CD4-positive, alpha-beta T cell (primary cell): ENCODE measurements at regions of chr19 and their contacts with region 1.

Region 1: DNA sequence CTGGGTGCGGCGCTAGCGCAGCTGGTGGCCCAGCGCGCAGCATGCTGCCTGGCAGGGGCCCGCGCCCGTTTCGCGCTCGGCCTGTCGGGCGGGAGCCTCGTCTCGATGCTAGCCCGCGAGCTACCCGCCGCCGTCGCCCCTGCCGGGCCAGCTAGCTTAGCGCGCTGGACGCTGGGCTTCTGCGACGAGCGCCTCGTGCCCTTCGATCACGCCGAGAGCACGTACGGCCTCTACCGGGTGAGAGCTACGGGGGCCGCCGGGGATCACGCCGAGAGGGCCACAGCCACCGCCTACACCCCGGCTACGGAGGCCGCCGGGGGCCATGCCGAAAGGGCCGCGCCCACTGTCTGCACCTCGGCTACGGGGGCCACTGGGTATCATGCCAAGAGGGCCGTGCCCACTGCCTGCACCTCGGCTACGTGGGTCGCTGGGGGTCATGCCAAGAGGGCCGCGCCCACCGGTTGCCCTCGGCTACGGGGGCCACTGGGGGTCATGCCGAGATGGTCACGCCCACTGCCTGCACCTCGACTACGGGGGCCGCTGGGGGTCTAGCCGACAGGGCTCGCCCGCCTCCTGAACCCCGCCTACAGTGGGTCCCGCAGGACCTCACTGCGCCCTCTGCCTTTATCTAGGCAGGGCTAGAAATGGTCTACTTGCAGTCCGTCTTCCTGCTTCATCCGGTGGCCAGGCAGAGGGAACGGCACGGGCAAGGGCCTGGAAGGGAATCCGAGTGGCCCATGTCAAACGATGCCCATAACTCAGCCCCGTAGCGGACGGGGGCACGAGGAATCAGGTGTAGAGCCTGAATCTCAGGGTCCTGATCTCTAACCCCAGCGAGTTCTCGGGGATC is 500 bp downstream of the PGLS start:
- DNase-seq: peak; percentile 73 to 92 (median 82)
- ATAC-seq: peak; percentile 75
- H3K4me3 ChIP-seq: peak overlapping the region; percentile 82
- H3K4me3 Mint-ChIP-seq: peak overlapping the region; percentile 93
- H3K27ac ChIP-seq: peak overlapping the region; percentile 64 to 94
- H3K27ac Mint-ChIP-seq: peak overlapping the region; percentile 80
- H3K4me1 ChIP-seq: peaks cover 19% of the 10 kb centered on the region
- H3K4me1 Mint-ChIP-seq: peaks cover 33% of the 10 kb centered on the region
- H3K27me3 ChIP-seq: no peaks in the 10 kb centered on the region
- H3K27me3 Mint-ChIP-seq: no peaks in the 10 kb centered on the region
- CTCF ChIP-seq: no peak

Region 2: DNA sequence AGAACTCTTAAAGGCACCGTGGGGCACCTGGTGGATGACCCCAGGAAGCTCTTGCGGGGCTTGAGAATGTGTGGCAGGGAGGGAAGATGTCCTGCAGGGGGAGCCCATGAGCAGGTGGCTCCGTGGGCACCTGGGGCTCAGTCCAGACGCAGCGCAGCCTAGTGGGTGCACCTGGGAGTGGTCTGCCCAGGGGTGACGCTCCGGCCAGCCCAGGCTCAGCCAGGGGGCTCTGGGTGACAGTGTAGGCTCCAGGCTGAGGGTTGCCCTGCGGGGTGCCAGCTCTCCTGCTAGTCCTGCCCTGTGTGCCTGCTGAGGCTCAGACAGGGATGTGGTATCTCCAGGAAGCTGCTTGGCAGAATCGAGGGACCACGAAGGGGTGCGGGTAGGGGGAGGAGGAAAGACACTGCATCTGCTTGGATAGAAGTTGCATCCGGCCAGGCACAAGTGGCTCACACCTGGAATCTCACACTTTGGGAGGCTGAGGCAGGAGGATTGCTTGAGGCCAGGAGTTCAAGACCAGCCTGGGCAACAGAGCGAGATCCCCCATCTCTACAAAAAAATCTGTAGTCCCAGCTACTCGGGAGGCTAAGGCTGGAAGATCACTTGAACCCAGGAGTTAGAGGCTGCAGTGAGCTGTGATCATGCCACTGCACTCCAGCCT is 15.5 kb before region 1 on chr19:
- CTCF ChIA-PET with region 1: interaction called, 38 read pairs
- POLR2A ChIA-PET with region 1: interaction called, 7 read pairs
- intact Hi-C with region 1: no loop called
- DNase-seq: peak; percentile 68 to 91 (median 76)
- ATAC-seq: peak; percentile 99
- H3K4me3 ChIP-seq: no peak overlapping the region
- H3K4me3 Mint-ChIP-seq: no peak overlapping the region
- H3K27ac ChIP-seq: no peak overlapping the region
- H3K27ac Mint-ChIP-seq: no peak overlapping the region
- H3K4me1 ChIP-seq: peaks cover 25% of the 10 kb centered on the region
- H3K4me1 Mint-ChIP-seq: peaks cover 17% of the 10 kb centered on the region
- H3K27me3 ChIP-seq: no peaks in the 10 kb centered on the region
- H3K27me3 Mint-ChIP-seq: no peaks in the 10 kb centered on the region
- CTCF ChIP-seq: peak; percentile 96

Region 3: GRCh38 chr19:17522988-17523872 is 11.3 kb after region 1 on chr19:
- CTCF ChIA-PET with region 1: no interaction called
- POLR2A ChIA-PET with region 1: interaction called, 45 read pairs
- intact Hi-C with region 1: no loop called
- DNase-seq: peak in 12 of 14 experiments; percentile 9 to 80 (median 48)
- ATAC-seq: peak; percentile 72
- H3K4me3 ChIP-seq: peak overlapping the region; percentile 19
- H3K4me3 Mint-ChIP-seq: peak overlapping the region; percentile 78
- H3K27ac ChIP-seq: peak overlapping the region in 1 of 2 donors; percentile 46
- H3K27ac Mint-ChIP-seq: peak overlapping the region; percentile 87
- H3K4me1 ChIP-seq: peaks cover 32% of the 10 kb centered on the region
- H3K4me1 Mint-ChIP-seq: peaks cover 27% of the 10 kb centered on the region
- H3K27me3 ChIP-seq: no peaks in the 10 kb centered on the region
- H3K27me3 Mint-ChIP-seq: no peaks in the 10 kb centered on the region
- CTCF ChIP-seq: no peak

Region 4: GRCh38 chr19:17539238-17540117 is 27.5 kb after region 1 on chr19:
- CTCF ChIA-PET with region 1: no interaction called
- POLR2A ChIA-PET with region 1: interaction called, 8 read pairs
- intact Hi-C with region 1: loop called (anchors 1 kb)
- DNase-seq: peak; percentile 84 to 99 (median 94)
- ATAC-seq: peak; percentile 96
- H3K4me3 ChIP-seq: peak overlapping the region; percentile 61
- H3K4me3 Mint-ChIP-seq: peak overlapping the region; percentile 93
- H3K27ac ChIP-seq: no peak overlapping the region
- H3K27ac Mint-ChIP-seq: peak overlapping the region; percentile 67
- H3K4me1 ChIP-seq: peaks cover 17% of the 10 kb centered on the region
- H3K4me1 Mint-ChIP-seq: peaks cover 12% of the 10 kb centered on the region
- H3K27me3 ChIP-seq: no peaks in the 10 kb centered on the region
- H3K27me3 Mint-ChIP-seq: no peaks in the 10 kb centered on the region
- CTCF ChIP-seq: peak; percentile 4

Region 5: DNA sequence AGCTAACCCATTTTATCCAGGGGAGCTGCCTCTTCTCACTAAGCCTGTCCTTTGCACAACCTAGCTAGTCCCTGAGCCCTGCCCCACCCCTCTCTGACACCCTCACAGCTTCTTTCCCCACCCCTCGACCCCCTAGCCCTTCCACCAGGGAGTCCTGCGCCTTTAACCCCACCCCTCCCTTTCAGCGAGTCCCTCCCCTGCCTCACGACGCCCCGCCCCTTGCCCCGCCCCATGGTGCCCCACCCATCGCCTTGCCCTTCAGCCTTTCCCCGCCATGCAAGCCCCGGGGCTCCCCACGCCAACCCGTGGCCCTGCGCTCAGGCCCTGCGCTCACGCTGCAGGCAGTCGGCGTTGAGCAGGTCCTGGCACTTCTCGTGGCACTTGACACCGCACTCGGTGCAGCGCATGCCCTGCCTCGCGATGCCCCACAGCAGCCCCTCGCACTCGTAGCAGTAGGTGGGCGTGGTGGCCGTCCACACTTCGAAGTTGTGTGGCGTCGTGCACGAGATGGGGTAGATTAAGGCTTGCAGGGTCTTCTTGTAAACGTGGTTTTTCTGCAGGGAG is 136.2 kb after region 1 on chr19:
- CTCF ChIA-PET with region 1: no interaction called
- POLR2A ChIA-PET with region 1: no interaction called
- intact Hi-C with region 1: no loop called
- DNase-seq: no peak
- ATAC-seq: no peak
- H3K4me3 ChIP-seq: no peak overlapping the region
- H3K4me3 Mint-ChIP-seq: no peak overlapping the region
- H3K27ac ChIP-seq: no peak overlapping the region
- H3K27ac Mint-ChIP-seq: no peak overlapping the region
- H3K4me1 ChIP-seq: no peaks in the 10 kb centered on the region
- H3K4me1 Mint-ChIP-seq: no peaks in the 10 kb centered on the region
- H3K27me3 ChIP-seq: peaks cover 2 to 8% of the 10 kb centered on the region in 2 experiments
- H3K27me3 Mint-ChIP-seq: peaks cover 27% of the 10 kb centered on the region
- CTCF ChIP-seq: no peak